ENCODE measurements at regions of chr20 and their contacts with region 1.

Region 1: GRCh38 chr20:54199721-54200176 is 8.1 kb upstream of the PFDN4 start:
- DNase-seq: peak; percentile 37
- H3K4me3 ChIP-seq: no peak overlapping the region
- CTCF ChIP-seq: peak; percentile 88

Region 2: GRCh38 chr20:53869466-53870258 is 330.1 kb before region 1 on chr20:
- CTCF ChIA-PET with region 1: no interaction called
- POLR2A ChIA-PET with region 1: no interaction called
- DNase-seq: no peak
- H3K4me3 ChIP-seq: no peak overlapping the region
- CTCF ChIP-seq: peak; percentile 72

Region 3: DNA sequence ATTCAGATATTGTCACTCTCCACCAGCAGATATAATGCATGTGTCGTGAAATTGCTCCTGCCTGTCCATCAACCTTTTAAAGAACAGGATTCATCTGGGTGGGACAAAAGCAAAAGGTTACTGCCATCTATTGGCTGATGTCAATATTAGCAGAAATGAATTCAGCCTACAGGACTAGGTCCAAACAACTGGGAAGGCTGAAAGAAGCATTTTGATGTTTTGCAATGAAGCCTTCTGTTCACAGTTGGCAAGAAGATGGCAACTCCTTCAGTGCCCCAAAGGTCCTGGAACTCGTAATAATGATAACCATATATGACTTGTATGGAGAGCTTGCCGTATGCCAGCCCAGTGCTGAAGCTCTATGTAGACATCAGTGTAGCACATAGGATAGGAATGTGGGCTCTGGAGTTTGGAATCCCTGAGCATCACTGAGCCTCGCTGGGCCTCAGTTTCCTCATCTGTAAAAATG is 136.9 kb before region 1 on chr20:
- CTCF ChIA-PET with region 1: interaction called, 26 read pairs
- POLR2A ChIA-PET with region 1: no interaction called
- DNase-seq: no peak
- H3K4me3 ChIP-seq: no peak overlapping the region
- CTCF ChIP-seq: peak; percentile 38

Region 4: GRCh38 chr20:54093423-54094267 is 106.1 kb before region 1 on chr20:
- CTCF ChIA-PET with region 1: interaction called, 1,179 read pairs
- POLR2A ChIA-PET with region 1: no interaction called
- DNase-seq: no peak
- H3K4me3 ChIP-seq: no peak overlapping the region
- CTCF ChIP-seq: no peak

Region 5: GRCh38 chr20:54122189-54122588 is 77.6 kb before region 1 on chr20:
- CTCF ChIA-PET with region 1: interaction called, 17 read pairs
- POLR2A ChIA-PET with region 1: no interaction called
- DNase-seq: no peak
- H3K4me3 ChIP-seq: no peak overlapping the region
- CTCF ChIP-seq: no peak

Region 6: GRCh38 chr20:54167909-54168872 is 31.6 kb before region 1 on chr20:
- CTCF ChIA-PET with region 1: interaction called, 12 read pairs
- POLR2A ChIA-PET with region 1: no interaction called
- DNase-seq: no peak
- H3K4me3 ChIP-seq: no peak overlapping the region
- CTCF ChIP-seq: no peak

Region 7: DNA sequence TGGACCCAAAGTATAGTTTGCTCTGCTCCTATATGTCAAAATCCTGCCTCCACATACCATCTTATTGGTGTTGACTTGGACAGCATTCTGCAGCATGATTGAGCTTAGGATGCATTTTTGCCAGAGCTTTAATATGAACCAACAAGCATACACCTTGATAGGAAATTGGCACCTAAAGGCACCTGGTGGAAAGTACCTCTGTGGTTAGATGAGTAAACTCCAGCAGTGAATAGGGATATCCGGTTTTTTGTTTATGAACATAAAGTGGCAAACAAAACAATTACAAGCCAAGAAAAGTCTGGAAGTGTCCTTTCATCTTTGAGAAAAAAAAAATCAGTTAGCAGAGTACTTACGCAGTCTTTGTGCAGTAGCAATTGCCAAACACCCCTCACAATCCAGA is 19.8 kb before region 1 on chr20:
- CTCF ChIA-PET with region 1: interaction called, 42 read pairs
- POLR2A ChIA-PET with region 1: no interaction called
- DNase-seq: no peak
- H3K4me3 ChIP-seq: no peak overlapping the region
- CTCF ChIP-seq: no peak

Region 8: DNA sequence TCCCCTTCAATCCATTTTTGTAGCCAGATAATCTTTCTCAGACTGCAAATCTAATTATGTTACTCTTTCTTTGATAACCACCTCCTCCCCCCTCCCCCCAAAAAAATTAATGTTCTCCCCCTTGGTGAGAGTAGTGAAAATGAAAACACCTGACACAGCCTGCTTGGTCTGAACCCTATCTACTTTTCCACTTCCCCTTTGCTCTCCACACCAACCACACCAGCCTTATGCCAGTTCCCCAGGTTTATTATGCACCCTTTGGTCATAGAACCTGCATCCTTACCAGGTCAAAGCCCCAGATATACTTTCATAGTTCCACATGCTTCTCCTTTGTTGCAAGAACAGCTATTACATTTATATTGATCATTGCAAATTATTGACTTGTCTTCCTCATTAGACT is 27.5 kb after region 1 on chr20:
- CTCF ChIA-PET with region 1: no interaction called
- POLR2A ChIA-PET with region 1: no interaction called
- DNase-seq: no peak
- H3K4me3 ChIP-seq: no peak overlapping the region
- CTCF ChIP-seq: no peak

Region 9: DNA sequence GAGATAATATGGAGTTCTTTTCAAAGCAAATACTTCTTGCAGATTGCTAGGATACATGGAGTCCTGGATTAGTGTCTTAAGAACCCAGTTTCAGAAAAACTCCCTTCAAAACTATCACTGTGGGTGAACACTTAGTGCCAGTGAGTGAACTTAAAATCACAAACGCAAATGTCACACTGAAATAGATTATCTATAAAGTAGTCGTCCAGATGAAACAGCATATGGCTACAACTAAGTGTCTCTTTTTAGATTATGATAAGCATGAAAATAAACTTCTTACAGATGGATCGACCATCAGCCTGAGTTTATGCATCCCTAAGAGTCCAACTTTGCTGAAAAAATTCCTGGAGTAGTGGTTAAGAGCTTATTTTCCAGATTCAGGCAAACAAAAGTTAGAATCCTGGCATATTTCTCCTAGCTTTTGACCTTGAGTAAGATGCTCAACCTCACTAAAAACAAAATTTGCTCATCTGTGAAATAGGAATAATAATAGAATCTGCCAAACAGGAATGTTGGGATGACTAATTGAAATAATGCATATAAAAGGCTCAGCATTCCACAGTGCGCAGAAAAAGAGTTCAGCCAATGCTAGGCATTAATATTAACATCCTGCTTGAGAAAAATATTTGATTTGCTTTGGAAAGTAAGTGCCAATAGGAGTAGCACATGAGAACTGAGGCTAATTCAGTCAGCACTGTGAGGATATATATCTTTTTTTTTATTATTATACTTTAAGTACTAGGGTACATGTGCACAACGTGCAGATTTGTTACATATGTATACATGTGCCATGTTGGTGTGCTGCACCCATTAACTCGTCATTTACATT is 346.2 kb after region 1 on chr20:
- CTCF ChIA-PET with region 1: no interaction called
- POLR2A ChIA-PET with region 1: no interaction called
- DNase-seq: peak; percentile 40
- H3K4me3 ChIP-seq: no peak overlapping the region
- CTCF ChIP-seq: no peak

Measured in AG04449 (cell line).